Motor neuron (in vitro differentiated cells): ENCODE measurements at regions of chr15 and their contacts with region 1.

Region 1: GRCh38 chr15:44584162-44584749 is 47.3 kb downstream of the EIF3J start:
- ATAC-seq: peak in 4 of 8 experiments; percentile 20 to 73 (median 32)
- H3K4me3 ChIP-seq: no peak overlapping the region
- H3K27ac ChIP-seq: no peak overlapping the region
- H3K4me1 ChIP-seq: no peaks in the 10 kb centered on the region

Region 2: DNA sequence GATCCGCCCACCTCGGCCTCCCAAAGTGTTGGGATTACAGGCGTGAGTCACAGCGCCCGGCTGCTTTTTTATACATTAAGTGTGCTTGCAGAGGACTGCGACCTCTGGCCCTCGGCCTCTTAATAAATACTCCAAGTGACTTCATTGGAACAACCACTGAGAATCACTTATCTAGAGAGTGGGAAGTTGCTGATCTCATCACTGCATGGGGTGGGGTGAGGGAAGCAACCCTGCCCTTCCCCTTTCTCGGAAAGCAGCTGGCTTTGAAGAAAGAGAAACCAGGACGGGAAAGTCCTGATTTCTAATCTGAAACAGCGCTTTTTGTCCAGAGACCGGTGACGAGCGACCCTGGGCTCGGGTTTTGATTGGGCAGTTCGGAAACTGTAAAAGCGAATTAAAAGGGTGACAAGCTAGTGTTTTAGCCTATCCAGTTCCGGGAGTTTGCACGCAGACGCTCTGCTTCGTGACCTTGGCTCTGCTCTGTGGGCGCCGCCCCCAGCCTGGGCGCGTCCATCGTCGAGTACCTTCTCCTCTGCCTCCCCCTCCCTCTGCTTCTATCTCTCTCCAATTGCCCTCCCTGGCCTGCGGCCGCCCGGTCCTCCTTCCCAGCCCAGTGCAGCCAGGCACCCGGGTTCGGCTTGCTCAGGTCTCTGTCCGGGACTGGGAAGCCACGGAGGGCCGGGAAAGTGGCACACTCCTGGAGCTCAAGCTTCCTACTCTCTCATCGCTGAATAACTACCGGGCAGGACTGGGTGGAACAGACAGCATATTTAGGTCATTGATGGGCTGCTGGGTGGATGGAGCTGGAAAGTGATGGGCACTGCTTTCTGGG is 144.5 kb after region 1 on chr15:
- in situ Hi-C with region 1: loop called in 1 of 9 experiments (anchors 25 kb)
- ATAC-seq: peak; percentile 67 to 95 (median 92)
- H3K4me3 ChIP-seq: peak overlapping the region; percentile 46 to 75 (median 56)
- H3K27ac ChIP-seq: peak overlapping the region; percentile 78 to 84
- H3K4me1 ChIP-seq: peaks cover 0 to 10% of the 10 kb centered on the region in 2 donors